ENCODE measurements at regions of chr9 and their contacts with region 1.

Region 1: GRCh38 chr9:35646533-35647265 is 4.0 kb downstream of the SIT1 start:
- DNase-seq: peak; percentile 93 to 94
- ATAC-seq: peak; percentile 95 to 97 (median 96)
- H3K4me3 ChIP-seq: peak overlapping the region; percentile 43 to 75 (median 66)
- H3K27ac ChIP-seq: peak overlapping the region; percentile 71 to 95 (median 82)
- H3K4me1 ChIP-seq: peaks cover 0 to 73% (median 12%) of the 10 kb centered on the region in 9 donors
- H3K27me3 ChIP-seq: no peaks in the 10 kb centered on the region
- CTCF ChIP-seq: peak; percentile 86 to 99 (median 96)

Region 2: DNA sequence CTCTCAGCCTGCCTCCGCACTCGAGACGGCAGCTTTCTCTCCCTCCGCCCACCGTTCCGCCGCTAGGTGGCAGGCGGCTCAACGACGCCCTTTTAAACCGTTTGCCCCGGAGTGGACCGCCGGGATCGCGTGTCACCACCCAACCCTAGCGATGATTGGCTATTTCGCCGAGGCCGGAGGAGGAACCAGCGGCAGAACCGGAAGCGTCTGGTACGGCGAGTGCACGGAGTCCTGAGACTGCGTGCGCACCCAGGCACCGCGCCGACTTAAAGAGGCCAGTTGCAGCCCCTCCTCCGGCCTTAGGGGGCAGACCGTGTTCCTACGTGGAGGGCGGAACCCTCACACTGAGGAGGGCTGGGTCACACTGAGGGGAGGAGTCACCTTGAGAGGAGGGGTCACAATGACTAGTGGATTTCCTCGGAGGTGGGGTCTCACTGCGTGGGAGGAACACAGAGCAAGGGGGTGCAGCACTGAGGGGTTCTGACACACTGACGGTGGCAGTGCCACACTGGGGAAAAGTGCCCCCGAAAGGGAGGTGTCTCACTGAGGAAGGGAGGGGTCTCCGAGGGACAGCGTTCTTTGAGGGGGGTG is 42.6 kb before region 1 on chr9:
- intact Hi-C with region 1: loop called in 6 of 10 experiments (anchors 2 to 10 kb)
- DNase-seq: peak; percentile 99 to 100
- ATAC-seq: peak; percentile 92 to 98 (median 96)
- H3K4me3 ChIP-seq: peak overlapping the region; percentile 56 to 93 (median 73)
- H3K27ac ChIP-seq: peak overlapping the region; percentile 72 to 95 (median 92)
- H3K4me1 ChIP-seq: peaks cover 0 to 38% (median 25%) of the 10 kb centered on the region in 9 donors
- H3K27me3 ChIP-seq: no peaks in the 10 kb centered on the region
- CTCF ChIP-seq: peak; percentile 86 to 99 (median 95)

Region 3: DNA sequence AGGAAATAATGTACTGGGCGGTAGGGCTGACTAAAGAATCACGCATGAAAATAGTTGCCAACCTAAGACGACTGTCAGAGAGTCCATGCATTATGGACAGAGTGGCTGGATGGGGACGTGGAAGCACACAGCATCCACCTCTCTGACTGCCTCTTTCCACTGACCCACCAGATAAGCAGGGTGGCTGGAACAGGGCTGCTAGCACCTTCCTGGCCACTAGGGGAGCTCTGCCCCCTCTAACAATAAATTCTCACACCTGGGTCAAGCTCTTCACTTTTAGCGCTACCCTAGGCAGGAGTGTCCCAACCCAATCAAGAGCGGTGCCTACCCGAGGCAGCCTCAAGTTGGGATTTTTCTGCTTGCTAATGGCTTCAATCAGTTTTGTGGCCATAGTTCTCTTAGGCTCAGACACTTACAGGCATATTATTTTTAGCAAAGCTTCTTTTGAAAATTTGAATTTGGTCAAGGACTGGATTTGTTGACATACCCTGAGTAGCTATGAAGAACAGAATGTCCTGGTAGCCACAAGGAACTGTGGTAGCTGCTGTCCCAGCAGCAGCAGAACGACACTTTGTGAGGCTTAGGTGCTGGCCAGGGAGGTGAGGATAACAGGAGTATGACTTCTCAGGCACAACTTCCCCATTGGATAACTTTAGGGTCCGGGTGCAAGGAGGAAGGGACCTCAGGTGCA is 50.0 kb after region 1 on chr9:
- intact Hi-C with region 1: loop called in 1 of 10 experiments (anchors 5 kb)
- DNase-seq: peak; percentile 46 to 47
- ATAC-seq: peak; percentile 56 to 76 (median 69)
- H3K4me3 ChIP-seq: no peak overlapping the region
- H3K27ac ChIP-seq: peak overlapping the region in 2 of 10 donors; percentile 0 to 4
- H3K4me1 ChIP-seq: peaks cover 0 to 16% (median 6%) of the 10 kb centered on the region in 9 donors
- H3K27me3 ChIP-seq: no peaks in the 10 kb centered on the region
- CTCF ChIP-seq: peak; percentile 70 to 94 (median 91)

Region 4: DNA sequence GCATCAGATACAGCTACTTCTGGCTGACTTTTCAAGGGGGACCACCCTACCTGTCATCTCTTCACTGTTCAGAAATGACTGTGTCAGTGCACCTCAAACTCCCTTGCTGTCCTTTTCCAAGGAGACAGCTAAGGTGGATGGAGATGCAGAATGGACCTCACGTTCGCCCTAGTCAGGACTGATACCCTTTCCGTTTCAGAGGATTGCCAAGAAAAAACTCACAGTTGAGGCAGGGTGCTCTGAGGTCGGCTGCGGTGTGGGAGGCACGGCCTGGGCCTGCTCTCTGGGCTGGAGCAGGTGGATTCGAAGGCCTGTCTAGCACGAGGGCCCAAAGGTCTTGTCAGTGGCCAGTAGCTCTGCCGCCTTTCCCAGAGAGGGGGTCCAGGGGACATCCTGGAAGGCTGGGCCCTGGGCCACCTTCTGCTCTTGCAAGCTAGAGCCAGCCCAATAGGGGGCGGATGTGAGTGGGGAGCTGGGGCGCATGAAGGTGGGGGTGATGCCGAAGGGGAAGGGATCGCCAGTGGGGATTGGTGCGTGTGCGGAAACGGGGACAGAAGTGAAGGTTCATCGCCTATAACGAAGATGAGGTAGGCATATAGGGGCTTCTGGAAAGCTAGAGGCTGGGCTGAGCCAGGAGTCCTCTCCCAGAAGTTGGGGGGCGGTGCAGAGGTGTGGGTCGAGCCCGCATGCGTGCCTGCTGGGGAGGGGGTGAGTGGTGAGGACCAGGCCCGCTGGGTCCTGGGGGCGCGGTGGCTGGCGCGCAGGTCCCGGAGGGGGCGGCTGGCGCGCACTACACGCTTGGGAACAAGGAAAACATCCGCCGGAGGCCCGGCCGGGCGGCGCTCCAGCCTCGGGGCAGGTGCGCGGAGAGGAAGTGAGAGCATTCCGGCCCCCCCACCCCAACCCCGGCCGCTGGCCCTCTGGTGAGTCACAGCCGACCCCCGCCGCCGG is 109.9 kb after region 1 on chr9:
- intact Hi-C with region 1: loop called in 1 of 10 experiments (anchors 10 kb)
- DNase-seq: peak; percentile 76 to 85
- ATAC-seq: peak; percentile 81 to 91 (median 86)
- H3K4me3 ChIP-seq: peak overlapping the region; percentile 44 to 73 (median 60)
- H3K27ac ChIP-seq: peak overlapping the region; percentile 81 to 95 (median 91)
- H3K4me1 ChIP-seq: peaks cover 0 to 55% (median 29%) of the 10 kb centered on the region in 9 donors
- H3K27me3 ChIP-seq: no peaks in the 10 kb centered on the region
- CTCF ChIP-seq: peak; percentile 20 to 67 (median 60)

Region 5: DNA sequence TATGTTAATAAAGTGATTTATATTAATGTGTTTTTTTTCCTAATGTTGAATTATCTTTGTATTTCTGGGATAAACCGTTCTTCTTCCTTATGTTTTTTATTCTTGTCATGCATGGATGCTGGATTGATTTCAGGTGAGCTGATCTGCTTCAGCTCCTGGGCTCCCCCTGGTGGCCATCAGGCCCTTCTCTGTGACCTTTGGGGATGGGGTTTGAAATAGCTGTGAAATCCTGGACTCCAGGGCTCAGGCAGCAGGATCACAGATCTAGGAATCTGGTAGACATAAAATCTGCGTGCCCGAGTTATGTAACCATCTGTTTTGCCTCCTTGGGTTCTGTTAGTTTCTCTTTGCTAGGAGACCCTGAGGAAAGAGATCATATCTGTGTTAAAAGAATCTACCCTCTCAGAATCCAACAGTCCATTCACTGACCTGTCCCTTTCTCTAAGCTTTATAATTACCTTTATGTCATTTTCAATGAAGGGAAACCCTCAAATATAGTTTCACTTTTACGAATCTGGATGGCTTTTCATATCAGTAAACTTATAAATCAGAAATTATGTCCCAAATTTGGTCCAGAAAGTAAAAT is 235.7 kb after region 1 on chr9:
- intact Hi-C with region 1: loop called in 3 of 10 experiments (anchors 5 to 10 kb)
- DNase-seq: peak; percentile 84 to 87
- ATAC-seq: peak in 7 of 8 donors; percentile 81 to 92 (median 85)
- H3K4me3 ChIP-seq: no peak overlapping the region
- H3K27ac ChIP-seq: no peak overlapping the region
- H3K4me1 ChIP-seq: no peaks in the 10 kb centered on the region
- H3K27me3 ChIP-seq: peaks cover 0 to 9% (median 0%) of the 10 kb centered on the region in 7 donors
- CTCF ChIP-seq: peak; percentile 89 to 100 (median 98)

Measured in heart right ventricle (tissue), 16 donors.